Activated naive CD4-positive, alpha-beta T cell treated with anti-CD3 and anti-CD28 coated beads for 36 hours (primary cell): ENCODE measurements at regions of chr7 and their contacts with region 1.

Region 1: DNA sequence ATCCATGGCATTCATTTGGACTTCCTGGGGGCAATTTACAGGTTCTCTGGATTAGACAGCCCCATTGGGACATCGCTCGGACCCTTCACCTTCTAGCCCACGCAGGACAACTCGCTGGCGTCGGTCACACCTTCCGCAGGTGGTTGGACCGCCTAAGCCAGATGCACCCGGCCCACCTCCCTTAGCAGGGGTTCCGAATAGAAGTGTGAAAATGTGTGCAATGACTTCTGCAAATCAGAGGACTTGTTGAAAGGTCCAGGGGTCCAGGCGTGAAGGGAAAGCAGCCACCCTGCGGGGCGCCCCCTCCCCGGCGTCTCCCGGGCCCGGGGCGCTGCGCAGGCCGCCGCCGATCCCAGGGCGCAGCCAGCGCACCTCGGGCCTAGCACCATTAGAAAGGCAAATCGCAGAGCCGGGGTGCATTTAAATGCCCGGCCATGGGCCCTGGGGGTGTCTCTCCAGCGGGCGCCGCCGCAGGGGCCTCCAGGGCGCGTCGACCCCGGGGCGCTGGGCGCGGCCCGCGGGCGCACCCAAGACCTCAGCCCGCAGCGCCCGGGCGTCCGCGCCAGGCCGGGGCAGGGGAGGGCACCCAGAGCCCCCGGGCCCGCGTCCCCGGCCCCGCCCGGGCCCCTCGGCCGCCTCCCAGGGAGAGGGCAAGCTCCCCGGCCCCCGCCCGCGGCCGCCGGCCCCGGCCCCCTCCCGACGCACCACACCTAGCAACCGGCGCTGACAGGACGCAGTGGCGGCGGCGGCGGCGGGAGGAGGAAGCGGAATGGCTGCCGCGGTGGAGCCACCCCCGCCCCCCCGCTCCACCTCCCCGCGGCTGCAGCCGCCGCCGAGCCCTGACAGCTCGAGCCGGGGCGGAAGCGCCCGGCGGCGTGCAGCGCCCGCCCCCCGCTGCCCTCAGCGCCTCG is 1.2 kb downstream of the JAZF1 start:
- DNase-seq: peak; percentile 70
- H3K4me3 Mint-ChIP-seq: peak overlapping the region; percentile 60
- H3K27ac Mint-ChIP-seq: no peak overlapping the region
- H3K4me1 Mint-ChIP-seq: peaks cover 22% of the 10 kb centered on the region
- H3K27me3 Mint-ChIP-seq: peaks cover 6% of the 10 kb centered on the region

Region 2: GRCh38 chr7:27739909-27740448 is 439.4 kb before region 1 on chr7 and contains the start of gene TAX1BP1:
- CTCF ChIA-PET with region 1: no interaction called
- intact Hi-C with region 1: loop called (anchors 1 kb)
- DNase-seq: peak; percentile 96
- H3K4me3 Mint-ChIP-seq: peak within 1 kb of the TSS; percentile 96
- H3K27ac Mint-ChIP-seq: peak within 1 kb of the TSS; percentile 98
- H3K4me1 Mint-ChIP-seq: peaks cover 35% of the 10 kb centered on the region
- H3K27me3 Mint-ChIP-seq: no peaks in the 10 kb centered on the region
- total RNA-seq, gene TAX1BP1: 84.1 to 87.9 TPM

Region 3: DNA sequence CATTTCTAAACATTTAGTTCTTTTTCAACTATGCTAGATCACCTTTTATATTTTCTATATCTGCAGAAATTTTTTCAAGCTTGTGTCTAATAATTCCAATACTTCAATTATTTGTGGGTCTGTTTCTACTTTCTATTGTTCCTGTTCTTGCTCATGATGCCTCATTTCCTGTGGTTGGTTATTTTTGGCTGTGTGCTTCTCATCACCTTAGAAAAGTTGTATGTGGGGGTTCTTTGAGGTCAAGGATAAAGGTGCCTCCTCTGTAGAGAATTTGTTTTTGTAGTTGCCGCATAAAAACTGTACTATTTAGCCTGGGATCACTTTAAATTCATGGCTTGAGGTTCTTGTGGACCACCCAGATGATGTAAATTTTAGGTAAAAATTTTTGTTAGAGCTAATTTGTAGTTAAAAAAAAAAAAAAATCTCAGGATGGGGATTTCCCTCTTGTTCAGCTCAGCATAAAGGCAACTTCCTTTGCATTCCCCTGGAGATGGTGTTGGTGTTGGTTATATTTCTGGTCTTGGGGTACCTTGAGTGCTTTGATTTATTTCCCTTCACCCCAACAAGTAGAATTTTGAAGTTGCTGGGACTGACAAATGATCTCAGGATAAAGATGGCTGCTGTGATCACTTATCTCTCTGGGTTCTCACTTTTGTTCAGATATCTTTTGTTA is 28.2 kb after region 1 on chr7:
- CTCF ChIA-PET with region 1: interaction called, 5 read pairs
- intact Hi-C with region 1: loop called (anchors 1 kb)
- DNase-seq: peak; percentile 30
- H3K4me3 Mint-ChIP-seq: no peak overlapping the region
- H3K27ac Mint-ChIP-seq: peak overlapping the region; percentile 43
- H3K4me1 Mint-ChIP-seq: peaks cover 39% of the 10 kb centered on the region
- H3K27me3 Mint-ChIP-seq: peaks cover 7% of the 10 kb centered on the region